Gastrocnemius medialis (tissue), 4 donors: ENCODE measurements at regions of chr17 and their contacts with region 1.

Region 1: GRCh38 chr17:1399679-1400512 is at the start of gene YWHAE:
- DNase-seq: peak; percentile 96 to 98
- ATAC-seq: peak; percentile 82 to 83
- H3K4me3 ChIP-seq: peak within 1 kb of the TSS; percentile 82 to 96 (median 92)
- H3K27ac ChIP-seq: peak within 1 kb of the TSS; percentile 96 to 100 (median 98)
- H3K4me1 ChIP-seq: peaks cover 30 to 37% of the 10 kb centered on the region in 2 donors
- H3K27me3 ChIP-seq: no peaks in the 10 kb centered on the region
- CTCF ChIP-seq: no peak
- POLR2A ChIP-seq: peak; percentile 96 to 97
- total RNA-seq, gene YWHAE: 915 to 1,814 (median 1,174) TPM

Region 2: DNA sequence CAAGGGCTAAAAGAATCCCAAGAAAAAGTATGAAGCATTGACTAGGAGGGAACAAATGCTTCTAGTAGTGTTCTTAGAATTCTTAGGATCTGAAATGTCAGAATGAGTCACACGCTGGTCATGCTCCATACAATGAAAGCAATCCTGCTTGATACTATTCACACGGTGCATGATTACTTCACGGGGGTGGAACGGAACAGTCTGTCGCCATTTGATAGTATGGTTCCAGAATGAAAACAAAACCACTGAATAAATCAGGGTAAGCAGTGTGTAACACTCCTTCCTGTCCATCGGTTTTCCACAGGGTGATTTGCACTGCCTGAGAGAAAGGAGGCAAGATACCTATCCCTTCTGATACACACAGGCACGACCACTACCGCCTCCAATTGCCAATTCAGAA is 23.0 kb after region 1 on chr17:
- in situ Hi-C with region 1: no loop called
- intact Hi-C with region 1: loop called (anchors 2 kb)
- DNase-seq: peak; percentile 80 to 87
- ATAC-seq: peak; percentile 97 to 99
- H3K4me3 ChIP-seq: peak overlapping the region in 1 of 4 donors; percentile 32
- H3K27ac ChIP-seq: peak overlapping the region; percentile 89 to 97 (median 93)
- H3K4me1 ChIP-seq: peaks cover 32 to 34% of the 10 kb centered on the region in 2 donors
- H3K27me3 ChIP-seq: no peaks in the 10 kb centered on the region
- CTCF ChIP-seq: peak in 1 of 5 experiments; percentile 11
- POLR2A ChIP-seq: peak; percentile 41 to 73